Heart right ventricle (tissue), 16 donors: ENCODE measurements at regions of chr3 and their contacts with region 1.

Region 1: GRCh38 chr3:159828542-159828943 is 160.1 kb upstream of the IL12A start:
- DNase-seq: no peak
- ATAC-seq: peak; percentile 30 to 83 (median 69)
- H3K4me3 ChIP-seq: no peak overlapping the region
- H3K27ac ChIP-seq: peak overlapping the region in 3 of 10 donors; percentile 5 to 52 (median 34)
- H3K4me1 ChIP-seq: peaks cover 0 to 56% (median 44%) of the 10 kb centered on the region in 9 donors
- H3K27me3 ChIP-seq: no peaks in the 10 kb centered on the region
- CTCF ChIP-seq: peak; percentile 48 to 78 (median 61)

Region 2: DNA sequence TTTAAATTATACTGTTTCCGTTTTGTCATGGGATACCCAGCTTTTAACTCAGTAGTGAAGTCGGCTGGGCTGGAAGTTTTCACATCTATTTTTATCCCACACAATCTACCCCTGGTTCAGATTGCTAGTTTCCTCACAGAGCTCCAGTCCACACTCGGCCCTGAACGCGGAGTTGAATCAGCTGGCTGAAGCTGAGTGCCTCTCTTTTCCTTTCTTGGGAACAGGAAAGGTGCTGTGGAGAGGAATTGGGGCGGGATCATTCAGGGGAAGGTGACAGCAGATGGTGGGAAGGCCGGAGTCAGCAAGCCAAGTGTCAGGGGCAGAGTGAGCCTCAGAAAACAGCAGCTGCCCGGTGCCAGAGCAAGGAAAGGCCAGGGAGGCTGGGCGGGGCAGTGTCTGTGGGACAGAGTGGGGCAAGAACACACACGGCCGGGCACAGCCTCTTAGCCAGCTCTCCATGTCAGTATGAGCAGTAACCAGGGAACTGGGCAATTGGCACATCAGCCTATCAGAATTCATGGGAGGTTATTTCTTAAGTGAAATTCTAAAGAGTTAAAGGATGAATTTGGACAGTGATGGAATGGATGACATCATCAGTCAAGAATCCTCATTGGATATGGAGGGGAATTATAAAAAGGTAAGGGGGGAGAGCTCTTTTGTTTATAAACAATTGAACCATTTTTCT is 24.4 kb after region 1 on chr3:
- intact Hi-C with region 1: loop called in 1 of 10 experiments (anchors 2 kb)
- DNase-seq: peak; percentile 76 to 77
- ATAC-seq: peak; percentile 66 to 88 (median 76)
- H3K4me3 ChIP-seq: peak overlapping the region in 9 of 10 donors; percentile 16 to 54 (median 46)
- H3K27ac ChIP-seq: peak overlapping the region; percentile 68 to 94 (median 90)
- H3K4me1 ChIP-seq: peaks cover 4 to 100% (median 74%) of the 10 kb centered on the region in 9 donors
- H3K27me3 ChIP-seq: no peaks in the 10 kb centered on the region
- CTCF ChIP-seq: no peak

Region 3: DNA sequence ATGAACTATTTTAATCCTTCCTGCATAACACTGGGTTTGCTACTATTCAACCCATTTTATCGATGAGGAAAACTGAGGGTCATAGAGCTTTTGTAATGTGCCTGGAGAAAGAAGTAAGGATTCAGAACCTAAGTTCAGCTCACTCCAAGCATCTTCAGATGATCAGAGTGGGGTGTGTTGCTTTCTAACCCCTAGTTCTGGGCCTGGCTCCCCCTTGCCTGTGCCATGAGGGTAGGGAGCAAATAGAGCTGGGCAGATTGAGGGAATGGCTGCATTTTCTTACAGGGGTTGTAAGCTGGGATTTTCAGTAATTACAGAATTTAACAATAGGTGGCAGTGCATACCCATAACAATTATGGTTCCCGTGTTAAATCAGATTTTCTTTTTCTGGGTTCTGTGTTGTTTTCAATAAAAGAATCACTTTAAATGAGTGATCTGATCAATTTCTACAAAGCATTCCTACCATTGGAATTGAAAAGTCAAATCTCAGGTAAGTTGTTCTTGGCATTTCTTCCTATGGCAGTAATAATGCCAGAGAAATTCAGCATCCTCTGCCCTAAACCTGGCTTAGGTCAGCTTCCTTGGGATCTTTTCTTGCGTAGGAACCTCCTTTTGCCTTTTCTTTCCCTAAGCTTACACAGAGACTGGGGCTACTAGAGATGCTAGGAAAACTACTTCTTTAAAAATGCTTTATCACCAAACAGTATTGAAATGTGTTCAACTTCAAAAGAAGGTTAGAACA is 56.3 kb after region 1 on chr3:
- intact Hi-C with region 1: loop called in 7 of 10 experiments (anchors 2 to 5 kb)
- DNase-seq: no peak
- ATAC-seq: no peak
- H3K4me3 ChIP-seq: no peak overlapping the region
- H3K27ac ChIP-seq: peak overlapping the region in 4 of 10 donors; percentile 11 to 40 (median 38)
- H3K4me1 ChIP-seq: peaks cover 16 to 78% (median 62%) of the 10 kb centered on the region in 9 donors
- H3K27me3 ChIP-seq: no peaks in the 10 kb centered on the region
- CTCF ChIP-seq: peak; percentile 32 to 76 (median 60)

Region 4: GRCh38 chr3:159988617-159989271 is 160.2 kb after region 1 on chr3 and contains the start of gene IL12A:
- intact Hi-C with region 1: loop called in 3 of 10 experiments (anchors 5 kb)
- DNase-seq: peak; percentile 81 to 85
- ATAC-seq: peak; percentile 94 to 98 (median 97)
- H3K4me3 ChIP-seq: peak within 1 kb of the TSS; percentile 43 to 86 (median 78)
- H3K27ac ChIP-seq: peak within 1 kb of the TSS in 6 of 10 donors; percentile 17 to 71 (median 36)
- H3K4me1 ChIP-seq: peaks cover 0 to 20% (median 10%) of the 10 kb centered on the region in 9 donors
- H3K27me3 ChIP-seq: no peaks in the 10 kb centered on the region
- CTCF ChIP-seq: peak; percentile 78 to 99 (median 96)
- total RNA-seq, gene IL12A: 0.53 to 2.3 (median 1.1) TPM